ENCODE measurements at regions of chr5 and their contacts with region 1.

Region 1: DNA sequence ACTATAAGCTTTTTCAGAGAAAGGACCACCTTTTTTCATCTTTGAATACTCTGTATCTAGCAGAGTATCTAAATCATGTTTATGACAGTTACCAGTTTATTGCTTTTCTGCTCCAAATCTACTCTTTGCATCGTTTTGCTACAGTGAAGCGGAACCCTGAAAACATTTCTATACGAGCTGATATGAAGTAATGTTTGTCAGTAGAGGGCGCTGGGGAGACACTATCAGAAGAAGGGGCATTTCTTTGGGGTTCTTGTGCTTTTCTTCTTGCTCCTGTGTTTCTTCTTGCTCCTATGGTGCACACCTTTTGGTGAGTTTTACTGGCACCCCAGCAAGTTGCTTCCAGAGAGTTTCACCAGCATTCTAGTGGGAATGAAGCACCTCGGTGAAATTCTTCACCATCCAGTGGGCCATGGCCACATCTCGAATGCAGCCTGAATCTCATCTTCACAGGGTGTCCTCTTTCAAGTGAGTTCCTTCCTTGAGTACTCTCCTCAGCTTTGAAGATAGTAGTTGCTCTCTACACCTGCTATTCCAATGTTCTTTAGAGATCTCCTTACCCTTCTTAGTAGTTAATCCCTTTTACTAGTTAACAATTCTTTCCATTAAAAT is 98.4 kb downstream of the FGF1 start:
- DNase-seq: peak in 1 of 2 experiments; percentile 65
- H3K4me3 ChIP-seq: no peak overlapping the region
- H3K27ac ChIP-seq: no peak overlapping the region
- H3K4me1 ChIP-seq: no peaks in the 10 kb centered on the region
- H3K27me3 ChIP-seq: no peaks in the 10 kb centered on the region
- CTCF ChIP-seq: peak in 2 of 3 experiments; percentile 68 to 73; a peak in 3 of 4 replicates
- EP300 ChIP-seq: no peak
- POLR2A ChIP-seq: no peak
- RAD21 ChIP-seq: peak; percentile 58 to 73

Region 2: GRCh38 chr5:142576303-142576702 is 11.2 kb before region 1 on chr5:
- CTCF ChIA-PET with region 1: interaction called, 15 read pairs
- POLR2A ChIA-PET with region 1: interaction called, 3 read pairs
- DNase-seq: no peak
- H3K4me3 ChIP-seq: no peak overlapping the region
- H3K27ac ChIP-seq: no peak overlapping the region
- H3K4me1 ChIP-seq: no peaks in the 10 kb centered on the region
- H3K27me3 ChIP-seq: no peaks in the 10 kb centered on the region
- CTCF ChIP-seq: no peak
- EP300 ChIP-seq: no peak
- POLR2A ChIP-seq: no peak
- RAD21 ChIP-seq: no peak

Region 3: GRCh38 chr5:142597546-142598341 is 10.3 kb after region 1 on chr5:
- CTCF ChIA-PET with region 1: interaction called, 68 read pairs
- POLR2A ChIA-PET with region 1: no interaction called
- DNase-seq: no peak
- H3K4me3 ChIP-seq: no peak overlapping the region
- H3K27ac ChIP-seq: no peak overlapping the region
- H3K4me1 ChIP-seq: no peaks in the 10 kb centered on the region; a peak in 1 of 7 replicates
- H3K27me3 ChIP-seq: 0 out of 7 replicates have a peak, but pooled peaks cover 0 to 3% (median 0%) of the 10 kb centered on the region in 4 experiments
- CTCF ChIP-seq: no peak
- EP300 ChIP-seq: no peak
- POLR2A ChIP-seq: no peak
- RAD21 ChIP-seq: no peak

Region 4: DNA sequence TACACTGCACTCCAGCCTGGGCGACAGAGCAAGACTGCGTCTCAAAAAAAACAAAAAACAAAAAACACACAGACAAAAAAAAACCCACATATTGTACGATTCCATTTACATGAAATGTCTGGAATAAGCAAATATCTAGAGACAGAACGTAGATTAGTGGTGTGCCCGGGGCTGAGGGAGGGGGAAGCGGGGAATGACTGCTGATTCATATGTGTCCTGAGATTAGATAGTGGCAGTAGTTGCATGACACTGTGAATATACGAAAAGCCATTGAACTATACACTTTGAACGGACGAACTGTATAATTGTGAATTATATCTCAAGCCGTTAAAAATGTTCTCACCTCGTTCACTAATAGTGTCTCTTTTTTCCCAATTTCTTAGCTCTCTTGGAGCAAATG is 74.5 kb after region 1 on chr5:
- CTCF ChIA-PET with region 1: no interaction called
- POLR2A ChIA-PET with region 1: no interaction called
- DNase-seq: no peak
- H3K4me3 ChIP-seq: no peak overlapping the region
- H3K27ac ChIP-seq: no peak overlapping the region
- H3K4me1 ChIP-seq: peaks cover 0 to 5% (median 0%) of the 10 kb centered on the region in 4 experiments; a peak in 2 of 7 replicates
- H3K27me3 ChIP-seq: no peaks in the 10 kb centered on the region
- CTCF ChIP-seq: no peak
- EP300 ChIP-seq: no peak
- POLR2A ChIP-seq: no peak
- RAD21 ChIP-seq: no peak

Measured in H1 (cell line).